Spleen (tissue), 13 donors: ENCODE measurements at regions of chr16 and their contacts with region 1.

Region 1: DNA sequence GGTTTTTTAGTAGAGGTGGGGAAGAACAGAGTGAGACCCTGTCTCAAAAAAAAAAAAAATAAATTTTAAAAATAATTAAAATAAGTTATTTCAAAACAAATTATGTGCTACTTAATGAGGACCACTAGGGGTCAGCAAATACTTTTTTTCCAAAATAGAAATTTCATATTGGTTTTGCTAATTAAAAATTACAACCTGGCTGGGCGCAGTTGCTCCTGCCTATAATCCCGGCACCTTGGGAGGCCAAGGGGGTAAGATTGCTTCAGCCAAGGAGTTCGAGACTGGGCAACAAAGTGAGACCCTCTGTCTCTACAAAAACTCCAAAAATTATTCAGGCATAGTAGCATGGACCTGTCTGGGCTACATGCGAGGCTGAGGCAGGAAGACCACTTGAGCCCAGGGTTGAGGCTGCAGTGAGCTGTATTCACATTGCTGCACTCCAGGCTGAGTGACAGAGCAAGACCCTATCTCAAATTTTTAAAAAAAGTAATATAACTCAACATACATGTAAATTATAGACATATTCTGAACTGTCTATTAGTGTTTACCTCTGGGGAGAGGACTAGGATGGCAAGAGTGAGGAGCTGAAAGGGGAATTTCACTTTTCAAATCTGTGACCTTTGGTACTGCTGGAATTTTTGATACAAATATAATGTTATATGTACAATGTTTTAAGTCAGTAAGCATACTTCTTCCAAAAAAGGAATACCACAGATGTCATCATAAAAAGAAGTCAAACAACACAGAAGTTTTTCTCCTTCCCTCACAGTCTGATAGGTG is 8.1 kb downstream of the MEIOB start:
- DNase-seq: no peak
- H3K4me3 ChIP-seq: no peak overlapping the region
- H3K27ac ChIP-seq: no peak overlapping the region
- H3K4me1 ChIP-seq: peaks cover 0 to 6% (median 2%) of the 10 kb centered on the region in 6 donors
- H3K27me3 ChIP-seq: peaks cover 0 to 49% (median 24%) of the 10 kb centered on the region in 7 donors
- CTCF ChIP-seq: peak in 9 of 11 experiments; percentile 14 to 62 (median 52)
- POLR2A ChIP-seq: no peak

Region 2: GRCh38 chr16:1929578-1930337 is 65.9 kb after region 1 on chr16:
- intact Hi-C with region 1: loop called (anchors 5 kb)
- DNase-seq: peak; percentile 99
- H3K4me3 ChIP-seq: peak overlapping the region; percentile 30 to 79 (median 50)
- H3K27ac ChIP-seq: peak overlapping the region; percentile 69 to 93 (median 83)
- H3K4me1 ChIP-seq: peaks cover 0 to 34% (median 20%) of the 10 kb centered on the region in 6 donors
- H3K27me3 ChIP-seq: peaks cover 0 to 33% (median 0%) of the 10 kb centered on the region in 7 donors
- CTCF ChIP-seq: peak; percentile 78 to 100 (median 100)
- POLR2A ChIP-seq: no peak